ENCODE measurements at regions of chr13 and their contacts with region 1.

Region 1: GRCh38 chr13:52968074-52968700 is 60.4 kb upstream of the OLFM4 start:
- DNase-seq: peak; percentile 83
- H3K4me3 Mint-ChIP-seq: no peak overlapping the region
- H3K27ac Mint-ChIP-seq: no peak overlapping the region
- H3K4me1 Mint-ChIP-seq: peaks cover 6% of the 10 kb centered on the region
- H3K27me3 Mint-ChIP-seq: peaks cover under 1% of the 10 kb centered on the region
- CTCF ChIP-seq: peak; percentile 95

Region 2: DNA sequence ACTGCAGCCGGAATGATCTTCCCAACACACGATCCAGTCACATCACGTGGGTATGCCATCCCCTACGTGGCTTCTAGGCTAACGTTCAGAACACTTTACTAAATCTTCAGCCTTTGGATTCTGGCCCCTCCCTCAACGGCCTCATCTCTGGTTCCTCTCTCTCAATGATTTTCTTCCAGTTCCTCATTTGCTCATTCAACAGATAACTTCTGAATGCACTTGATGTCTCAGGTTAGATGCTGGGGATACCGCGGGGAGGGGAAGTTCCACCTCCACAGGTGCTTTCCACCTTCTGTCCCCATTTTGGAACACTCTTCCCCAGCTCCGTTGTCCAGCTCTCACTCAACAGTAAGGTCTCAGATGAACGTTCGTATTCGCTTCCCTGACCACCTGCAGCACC is 1023.0 kb before region 1 on chr13:
- CTCF ChIA-PET with region 1: no interaction called
- POLR2A ChIA-PET with region 1: no interaction called
- intact Hi-C with region 1: no loop called
- DNase-seq: no peak
- H3K4me3 Mint-ChIP-seq: no peak overlapping the region
- H3K27ac Mint-ChIP-seq: no peak overlapping the region
- H3K4me1 Mint-ChIP-seq: peaks cover 6% of the 10 kb centered on the region
- H3K27me3 Mint-ChIP-seq: no peaks in the 10 kb centered on the region
- CTCF ChIP-seq: no peak

Region 3: DNA sequence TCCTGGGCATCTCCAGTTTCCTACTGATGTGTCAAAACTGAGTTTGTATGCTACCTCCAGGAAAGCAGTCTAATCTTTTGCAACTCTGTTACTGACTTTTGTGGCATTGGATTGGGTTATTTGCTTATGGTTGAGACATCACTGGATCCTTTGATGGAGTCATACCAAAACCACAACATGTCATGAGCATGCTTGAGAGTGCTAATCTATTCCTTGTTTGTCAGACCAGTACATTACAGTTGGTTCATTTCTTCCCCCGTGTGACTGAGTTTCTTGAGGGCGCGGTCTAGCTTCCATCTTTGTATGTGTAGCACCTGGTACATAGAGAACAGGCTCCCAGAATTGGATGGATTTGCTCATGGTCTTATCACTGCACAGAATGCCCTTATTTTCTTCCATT is 272.3 kb before region 1 on chr13:
- CTCF ChIA-PET with region 1: interaction called, 10 read pairs
- POLR2A ChIA-PET with region 1: no interaction called
- intact Hi-C with region 1: no loop called
- DNase-seq: peak; percentile 33
- H3K4me3 Mint-ChIP-seq: no peak overlapping the region
- H3K27ac Mint-ChIP-seq: peak overlapping the region; percentile 12
- H3K4me1 Mint-ChIP-seq: peaks cover 9% of the 10 kb centered on the region
- H3K27me3 Mint-ChIP-seq: no peaks in the 10 kb centered on the region
- CTCF ChIP-seq: no peak

Region 4: GRCh38 chr13:52862358-52863206 is 105.6 kb before region 1 on chr13:
- CTCF ChIA-PET with region 1: interaction called, 111 read pairs
- POLR2A ChIA-PET with region 1: no interaction called
- intact Hi-C with region 1: loop called (anchors 1 kb)
- DNase-seq: peak; percentile 53
- H3K4me3 Mint-ChIP-seq: no peak overlapping the region
- H3K27ac Mint-ChIP-seq: no peak overlapping the region
- H3K4me1 Mint-ChIP-seq: no peaks in the 10 kb centered on the region
- H3K27me3 Mint-ChIP-seq: peaks cover 19% of the 10 kb centered on the region
- CTCF ChIP-seq: peak; percentile 80

Region 5: GRCh38 chr13:52896827-52897659 is 71.1 kb before region 1 on chr13:
- CTCF ChIA-PET with region 1: interaction called, 20 read pairs
- POLR2A ChIA-PET with region 1: no interaction called
- intact Hi-C with region 1: loop called (anchors 1 kb)
- DNase-seq: peak; percentile 30
- H3K4me3 Mint-ChIP-seq: no peak overlapping the region
- H3K27ac Mint-ChIP-seq: no peak overlapping the region
- H3K4me1 Mint-ChIP-seq: no peaks in the 10 kb centered on the region
- H3K27me3 Mint-ChIP-seq: no peaks in the 10 kb centered on the region
- CTCF ChIP-seq: peak; percentile 70

Region 6: GRCh38 chr13:52938065-52938464 is 30.1 kb before region 1 on chr13:
- CTCF ChIA-PET with region 1: interaction called, 24 read pairs
- POLR2A ChIA-PET with region 1: no interaction called
- intact Hi-C with region 1: no loop called
- DNase-seq: no peak
- H3K4me3 Mint-ChIP-seq: no peak overlapping the region
- H3K27ac Mint-ChIP-seq: no peak overlapping the region
- H3K4me1 Mint-ChIP-seq: no peaks in the 10 kb centered on the region
- H3K27me3 Mint-ChIP-seq: peaks cover 28% of the 10 kb centered on the region
- CTCF ChIP-seq: no peak

Region 7: DNA sequence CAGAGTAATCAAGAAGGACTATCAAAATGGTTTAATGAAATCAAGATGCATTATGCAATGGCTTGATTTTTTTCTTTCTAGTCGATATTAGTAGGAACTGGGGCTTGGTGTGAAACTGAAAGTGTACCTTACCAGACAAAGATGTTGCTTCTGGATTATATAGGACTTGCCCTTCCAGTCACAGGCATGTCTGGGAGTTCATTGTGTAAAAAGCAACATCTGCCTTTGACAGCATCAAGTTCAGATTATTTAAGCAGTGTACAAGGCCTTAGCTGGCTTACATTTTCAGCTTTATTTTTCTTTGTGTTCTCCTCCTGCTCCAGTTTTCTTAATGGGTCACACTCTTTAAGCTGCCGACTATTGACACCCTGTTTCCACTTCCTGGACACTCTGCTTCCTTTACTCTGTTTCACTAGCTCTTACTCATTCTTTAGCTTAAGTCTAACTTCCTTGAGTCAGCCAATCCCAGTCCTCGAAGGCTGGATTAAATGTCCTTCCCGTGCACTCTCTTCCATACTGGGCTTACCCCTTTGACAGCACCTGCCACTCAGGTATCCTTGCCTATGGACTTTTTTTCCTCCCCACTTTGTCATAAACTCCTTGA is 31.0 kb after region 1 on chr13:
- CTCF ChIA-PET with region 1: interaction called, 13 read pairs
- POLR2A ChIA-PET with region 1: no interaction called
- intact Hi-C with region 1: no loop called
- DNase-seq: no peak
- H3K4me3 Mint-ChIP-seq: no peak overlapping the region
- H3K27ac Mint-ChIP-seq: no peak overlapping the region
- H3K4me1 Mint-ChIP-seq: peaks cover 12% of the 10 kb centered on the region
- H3K27me3 Mint-ChIP-seq: peaks cover 56% of the 10 kb centered on the region
- CTCF ChIP-seq: no peak

Region 8: GRCh38 chr13:53198017-53198416 is 229.8 kb after region 1 on chr13:
- CTCF ChIA-PET with region 1: interaction called, 11 read pairs
- POLR2A ChIA-PET with region 1: no interaction called
- intact Hi-C with region 1: no loop called
- DNase-seq: peak; percentile 22
- H3K4me3 Mint-ChIP-seq: no peak overlapping the region
- H3K27ac Mint-ChIP-seq: no peak overlapping the region
- H3K4me1 Mint-ChIP-seq: no peaks in the 10 kb centered on the region
- H3K27me3 Mint-ChIP-seq: no peaks in the 10 kb centered on the region
- CTCF ChIP-seq: no peak

Region 9: DNA sequence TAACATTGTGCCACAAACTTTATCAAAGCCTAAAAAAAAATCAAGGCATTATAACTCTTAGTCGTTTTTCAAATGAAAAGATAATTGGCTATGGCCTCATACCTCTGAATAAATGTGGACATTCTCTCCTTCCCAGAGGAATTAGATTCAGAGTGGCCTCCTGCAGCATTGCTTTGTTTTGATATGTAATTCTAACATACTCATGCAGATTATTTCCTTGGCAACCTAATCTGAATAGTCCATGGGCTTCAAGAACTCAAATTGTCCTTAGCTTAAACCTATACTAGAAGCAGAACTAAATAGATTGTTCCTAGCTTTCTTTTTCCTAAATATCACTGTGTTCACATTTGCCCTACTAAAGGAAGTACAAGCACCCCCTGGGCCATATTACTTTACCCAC is 1207.3 kb after region 1 on chr13:
- CTCF ChIA-PET with region 1: no interaction called
- POLR2A ChIA-PET with region 1: no interaction called
- intact Hi-C with region 1: no loop called
- DNase-seq: no peak
- H3K4me3 Mint-ChIP-seq: no peak overlapping the region
- H3K27ac Mint-ChIP-seq: no peak overlapping the region
- H3K4me1 Mint-ChIP-seq: no peaks in the 10 kb centered on the region
- H3K27me3 Mint-ChIP-seq: peaks cover 12% of the 10 kb centered on the region
- CTCF ChIP-seq: no peak

Measured in MCF 10A (cell line).